ENCODE measurements at regions of chr11 and their contacts with region 1.

Region 1: GRCh38 chr11:129395432-129395831 is 19.8 kb downstream of the BARX2 start:
- DNase-seq: no peak
- H3K4me3 ChIP-seq: no peak overlapping the region
- H3K27ac ChIP-seq: no peak overlapping the region
- H3K4me1 ChIP-seq: no peaks in the 10 kb centered on the region
- H3K27me3 ChIP-seq: no peaks in the 10 kb centered on the region
- CTCF ChIP-seq: no peak
- EP300 ChIP-seq: no peak
- POLR2A ChIP-seq: no peak
- RAD21 ChIP-seq: no peak

Region 2: DNA sequence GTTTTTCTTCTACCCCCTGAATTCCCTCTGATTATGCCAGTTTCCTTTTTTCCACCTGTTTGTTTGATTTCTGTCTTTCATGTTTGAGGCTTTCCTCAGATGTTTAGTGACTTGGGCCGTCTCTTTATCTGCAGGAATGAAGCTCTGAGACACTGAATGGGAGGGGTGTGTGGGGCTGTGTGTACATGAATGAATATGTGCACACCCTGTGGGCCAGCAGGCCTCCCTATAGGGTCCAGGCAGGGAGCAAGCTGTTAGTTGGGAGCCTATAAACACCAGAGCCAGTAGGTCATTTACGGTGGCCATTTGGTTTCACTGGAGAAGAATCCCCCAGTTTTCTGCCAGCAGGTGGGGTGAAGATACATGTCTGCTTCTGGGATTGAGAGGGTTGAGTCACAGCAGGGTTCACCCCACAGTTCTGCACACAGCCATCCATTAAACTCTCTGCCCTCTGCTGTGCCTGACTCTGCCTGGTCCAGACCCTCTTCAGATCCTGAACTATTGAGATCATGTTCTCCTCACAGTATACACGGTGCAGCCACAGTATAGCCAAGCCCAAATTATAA is 15.0 kb after region 1 on chr11:
- CTCF ChIA-PET with region 1: interaction called, 11 read pairs
- POLR2A ChIA-PET with region 1: no interaction called
- DNase-seq: no peak
- H3K4me3 ChIP-seq: no peak overlapping the region
- H3K27ac ChIP-seq: no peak overlapping the region
- H3K4me1 ChIP-seq: no peaks in the 10 kb centered on the region
- H3K27me3 ChIP-seq: no peaks in the 10 kb centered on the region; a peak in 1 of 7 replicates
- CTCF ChIP-seq: peak in 1 of 3 experiments; percentile 5; a peak in 2 of 4 replicates
- EP300 ChIP-seq: no peak
- POLR2A ChIP-seq: no peak
- RAD21 ChIP-seq: no peak; a peak in 1 of 4 replicates

Measured in H1 (cell line).